Caco-2 (cell line): ENCODE measurements at regions of chr3 and their contacts with region 1.

Region 1: GRCh38 chr3:50192689-50193141 is 1.3 kb downstream of the GNAT1 start:
- DNase-seq: peak; percentile 71 to 87
- H3K4me3 ChIP-seq: no peak overlapping the region
- H3K4me3 Mint-ChIP-seq: no peak overlapping the region
- H3K27ac Mint-ChIP-seq: no peak overlapping the region
- H3K4me1 ChIP-seq: peaks cover 20% of the 10 kb centered on the region
- H3K4me1 Mint-ChIP-seq: no peaks in the 10 kb centered on the region
- H3K27me3 ChIP-seq: no peaks in the 10 kb centered on the region
- H3K27me3 Mint-ChIP-seq: no peaks in the 10 kb centered on the region
- CTCF ChIP-seq: peak; percentile 82 to 91

Region 2: GRCh38 chr3:49984394-49984793 is 208.3 kb before region 1 on chr3:
- CTCF ChIA-PET with region 1: no interaction called
- POLR2A ChIA-PET with region 1: no interaction called
- intact Hi-C with region 1: no loop called
- DNase-seq: no peak
- H3K4me3 ChIP-seq: no peak overlapping the region
- H3K4me3 Mint-ChIP-seq: no peak overlapping the region
- H3K27ac Mint-ChIP-seq: no peak overlapping the region
- H3K4me1 ChIP-seq: no peaks in the 10 kb centered on the region
- H3K4me1 Mint-ChIP-seq: no peaks in the 10 kb centered on the region
- H3K27me3 ChIP-seq: no peaks in the 10 kb centered on the region
- H3K27me3 Mint-ChIP-seq: no peaks in the 10 kb centered on the region
- CTCF ChIP-seq: no peak

Region 3: DNA sequence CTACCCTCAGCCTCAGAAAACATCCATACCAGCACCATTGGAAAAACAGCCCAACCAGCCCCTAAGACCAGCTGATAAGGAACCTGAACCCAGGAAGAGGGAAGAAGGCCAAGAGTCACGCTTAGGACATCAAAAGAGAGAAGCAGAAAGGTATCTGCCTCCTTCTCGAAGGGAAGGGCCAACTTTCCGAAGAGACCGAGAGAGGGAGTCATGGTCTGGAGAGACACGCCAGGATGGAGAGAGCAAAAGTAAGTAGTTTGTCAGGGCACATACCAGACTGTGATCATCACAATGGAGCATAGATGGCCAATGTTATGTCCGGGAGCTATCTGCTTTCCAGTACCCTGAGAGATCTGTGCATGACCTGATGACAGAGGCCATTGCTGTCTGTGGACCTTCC is 135.0 kb before region 1 on chr3:
- CTCF ChIA-PET with region 1: no interaction called
- POLR2A ChIA-PET with region 1: no interaction called
- intact Hi-C with region 1: no loop called
- DNase-seq: no peak
- H3K4me3 ChIP-seq: no peak overlapping the region
- H3K4me3 Mint-ChIP-seq: no peak overlapping the region
- H3K27ac Mint-ChIP-seq: no peak overlapping the region
- H3K4me1 ChIP-seq: no peaks in the 10 kb centered on the region
- H3K4me1 Mint-ChIP-seq: no peaks in the 10 kb centered on the region
- H3K27me3 ChIP-seq: no peaks in the 10 kb centered on the region
- H3K27me3 Mint-ChIP-seq: no peaks in the 10 kb centered on the region
- CTCF ChIP-seq: no peak

Region 4: DNA sequence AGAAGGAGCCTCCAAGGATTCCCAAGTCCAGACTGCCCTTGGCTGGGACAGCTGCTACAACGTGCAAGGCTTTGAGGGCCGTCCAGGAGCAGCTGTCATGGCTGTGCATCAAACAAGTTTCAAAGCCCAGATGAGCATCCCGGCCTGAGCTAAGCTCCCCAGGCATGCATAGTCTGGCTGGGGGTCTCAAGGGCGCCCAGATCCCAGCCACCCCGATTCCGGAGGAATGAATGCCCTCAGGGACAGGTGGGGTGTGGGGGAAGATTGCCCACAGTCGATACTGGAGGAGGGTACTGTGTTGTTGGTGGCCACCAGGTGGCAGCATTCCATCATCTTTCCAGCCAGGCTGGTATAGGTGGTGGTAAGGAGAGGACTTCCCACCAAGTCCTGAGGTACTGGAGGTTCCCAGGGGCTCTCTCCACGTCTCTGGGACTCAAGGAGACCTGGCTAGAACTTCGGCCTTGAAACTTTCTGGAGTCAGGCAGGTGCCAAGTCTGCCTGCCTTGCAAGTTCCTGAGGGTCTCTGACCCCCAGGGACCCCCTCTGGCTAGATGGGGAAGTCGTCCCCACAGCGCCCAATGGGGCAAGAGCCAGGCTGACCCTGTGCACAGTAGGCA is 71.2 kb before region 1 on chr3:
- CTCF ChIA-PET with region 1: interaction called, 15 read pairs
- POLR2A ChIA-PET with region 1: no interaction called
- intact Hi-C with region 1: loop called (anchors 1 kb)
- DNase-seq: peak; percentile 84 to 85
- H3K4me3 ChIP-seq: no peak overlapping the region
- H3K4me3 Mint-ChIP-seq: no peak overlapping the region
- H3K27ac Mint-ChIP-seq: no peak overlapping the region
- H3K4me1 ChIP-seq: peaks cover 32% of the 10 kb centered on the region
- H3K4me1 Mint-ChIP-seq: peaks cover 24% of the 10 kb centered on the region
- H3K27me3 ChIP-seq: no peaks in the 10 kb centered on the region
- H3K27me3 Mint-ChIP-seq: no peaks in the 10 kb centered on the region
- CTCF ChIP-seq: peak; percentile 84 to 87

Region 5: GRCh38 chr3:50211930-50212329 is 19.2 kb after region 1 on chr3:
- CTCF ChIA-PET with region 1: interaction called, 19 read pairs
- POLR2A ChIA-PET with region 1: interaction called, 9 read pairs
- intact Hi-C with region 1: loop called (anchors 2 kb)
- DNase-seq: no peak
- H3K4me3 ChIP-seq: no peak overlapping the region
- H3K4me3 Mint-ChIP-seq: no peak overlapping the region
- H3K27ac Mint-ChIP-seq: no peak overlapping the region
- H3K4me1 ChIP-seq: peaks cover 22% of the 10 kb centered on the region
- H3K4me1 Mint-ChIP-seq: peaks cover 12% of the 10 kb centered on the region
- H3K27me3 ChIP-seq: no peaks in the 10 kb centered on the region
- H3K27me3 Mint-ChIP-seq: no peaks in the 10 kb centered on the region
- CTCF ChIP-seq: no peak

Region 6: DNA sequence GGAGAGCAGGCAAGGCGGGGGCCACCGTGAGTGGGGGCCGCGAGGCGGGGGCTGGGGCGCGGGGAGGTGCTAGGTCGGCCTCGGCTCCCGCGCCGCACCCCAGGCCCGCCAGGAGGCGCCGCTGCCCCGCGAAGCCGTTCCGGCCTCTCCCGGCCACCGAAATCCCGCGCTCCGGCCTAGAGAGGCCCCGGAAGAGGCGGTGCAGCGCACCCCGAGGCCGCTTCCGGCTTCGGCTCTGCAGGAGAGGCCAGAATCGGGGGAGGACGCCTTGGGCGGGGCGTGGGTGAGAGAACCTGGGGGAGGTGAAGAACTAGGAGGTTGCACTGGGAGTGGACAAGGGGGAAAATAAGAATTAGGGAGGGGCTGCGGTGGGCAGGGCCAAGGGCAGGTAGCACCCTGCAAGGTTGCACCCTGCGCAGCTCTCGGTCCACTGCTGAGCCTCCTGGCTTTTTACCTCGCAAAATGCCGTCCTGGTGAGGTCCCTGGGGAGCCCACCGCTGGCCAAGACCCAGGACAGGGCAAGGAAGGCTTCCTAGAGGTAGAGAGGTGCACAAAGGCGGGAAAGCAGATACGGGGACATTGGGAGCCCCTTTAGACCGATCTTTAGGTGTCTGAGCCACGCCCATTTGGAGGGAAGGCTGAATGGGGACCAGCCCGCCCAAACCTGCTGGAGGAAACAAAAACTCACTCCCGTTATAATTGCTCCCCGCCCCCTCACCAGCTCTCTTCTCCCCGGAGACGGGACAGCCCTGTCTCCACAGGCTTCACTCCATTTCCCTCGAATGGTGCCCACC is 34.9 kb after region 1 on chr3:
- CTCF ChIA-PET with region 1: interaction called, 100 read pairs
- POLR2A ChIA-PET with region 1: no interaction called
- intact Hi-C with region 1: loop called (anchors 1 kb)
- DNase-seq: peak; percentile 97
- H3K4me3 ChIP-seq: peak overlapping the region; percentile 72
- H3K4me3 Mint-ChIP-seq: peak overlapping the region; percentile 78
- H3K27ac Mint-ChIP-seq: peak overlapping the region; percentile 78
- H3K4me1 ChIP-seq: peaks cover 6% of the 10 kb centered on the region; the same call in 1 of the 2 replicates
- H3K4me1 Mint-ChIP-seq: no peaks in the 10 kb centered on the region
- H3K27me3 ChIP-seq: no peaks in the 10 kb centered on the region
- H3K27me3 Mint-ChIP-seq: no peaks in the 10 kb centered on the region
- CTCF ChIP-seq: peak; percentile 62 to 82

Region 7: GRCh38 chr3:50245831-50246516 is 53.3 kb after region 1 on chr3:
- CTCF ChIA-PET with region 1: interaction called, 23 read pairs
- POLR2A ChIA-PET with region 1: no interaction called
- intact Hi-C with region 1: no loop called
- DNase-seq: peak; percentile 81 to 90
- H3K4me3 ChIP-seq: no peak overlapping the region
- H3K4me3 Mint-ChIP-seq: no peak overlapping the region
- H3K27ac Mint-ChIP-seq: peak overlapping the region; percentile 55
- H3K4me1 ChIP-seq: peaks cover 8% of the 10 kb centered on the region
- H3K4me1 Mint-ChIP-seq: no peaks in the 10 kb centered on the region
- H3K27me3 ChIP-seq: no peaks in the 10 kb centered on the region
- H3K27me3 Mint-ChIP-seq: no peaks in the 10 kb centered on the region
- CTCF ChIP-seq: peak; percentile 87 to 97